ENCODE measurements at regions of chr20 and their contacts with region 1.

Region 1: GRCh38 chr20:5100684-5101347 is 18.9 kb downstream of the PCNA start:
- DNase-seq: peak; percentile 56 to 72
- H3K4me3 ChIP-seq: no peak overlapping the region
- H3K27ac ChIP-seq: peak overlapping the region; percentile 64
- H3K4me1 ChIP-seq: 0 out of 2 replicates have a peak, but pooled peaks cover 4% of the 10 kb centered on the region
- H3K27me3 ChIP-seq: no peaks in the 10 kb centered on the region
- CTCF ChIP-seq: peak; percentile 93

Region 2: DNA sequence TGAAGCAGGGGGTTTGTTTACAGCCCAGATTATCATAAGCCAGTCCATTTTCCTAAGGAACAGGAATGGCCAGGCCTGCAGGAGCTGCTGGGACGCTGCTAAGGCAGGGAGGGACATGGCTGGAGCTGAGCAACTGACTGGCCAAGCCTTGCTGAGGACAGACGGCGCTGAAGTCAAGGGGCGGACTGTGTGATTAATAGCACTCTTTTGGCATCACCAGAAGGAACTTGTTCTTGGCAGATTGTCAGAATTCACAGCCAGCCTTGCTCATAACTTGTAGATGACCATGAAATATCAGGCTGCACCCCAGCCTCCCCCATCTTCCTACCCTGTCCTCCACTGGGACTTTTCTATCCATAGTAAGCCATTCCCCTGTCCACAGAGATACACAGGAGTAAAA is 866.7 kb before region 1 on chr20:
- CTCF ChIA-PET with region 1: interaction called, 12 read pairs
- POLR2A ChIA-PET with region 1: no interaction called
- intact Hi-C with region 1: no loop called
- DNase-seq: no peak
- H3K4me3 ChIP-seq: no peak overlapping the region
- H3K27ac ChIP-seq: no peak overlapping the region
- H3K4me1 ChIP-seq: no peaks in the 10 kb centered on the region; the same call in 1 of the 2 replicates
- H3K27me3 ChIP-seq: no peaks in the 10 kb centered on the region
- CTCF ChIP-seq: no peak

Region 3: DNA sequence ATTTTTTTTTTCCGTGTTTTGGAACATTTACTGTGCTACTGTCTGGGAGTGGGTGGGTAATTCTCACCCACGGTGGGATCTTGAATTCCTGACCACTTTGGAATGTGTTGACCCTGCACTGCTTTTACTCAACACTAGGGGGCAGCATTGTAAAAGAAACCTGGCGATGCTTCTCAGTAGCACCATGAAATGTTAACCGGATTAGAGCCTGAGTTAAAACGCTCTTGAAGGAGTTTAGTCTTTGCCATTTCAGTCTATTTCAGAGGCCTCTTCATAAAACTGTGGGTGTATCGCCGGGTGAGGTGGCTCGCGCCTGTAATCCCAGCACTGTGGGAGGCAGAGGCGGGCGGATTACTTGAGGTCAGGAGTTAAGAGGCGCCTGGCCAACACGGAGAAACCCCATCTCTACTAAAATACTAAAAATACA is 493.5 kb before region 1 on chr20:
- CTCF ChIA-PET with region 1: no interaction called
- POLR2A ChIA-PET with region 1: no interaction called
- intact Hi-C with region 1: loop called (anchors 5 kb)
- DNase-seq: peak; percentile 49 to 57
- H3K4me3 ChIP-seq: no peak overlapping the region
- H3K27ac ChIP-seq: no peak overlapping the region
- H3K4me1 ChIP-seq: peaks cover 7% of the 10 kb centered on the region
- H3K27me3 ChIP-seq: no peaks in the 10 kb centered on the region
- CTCF ChIP-seq: peak; percentile 97

Region 4: GRCh38 chr20:5001174-5002076 is 99.4 kb before region 1 on chr20 and contains the start of gene SLC23A2:
- CTCF ChIA-PET with region 1: no interaction called
- POLR2A ChIA-PET with region 1: no interaction called
- intact Hi-C with region 1: loop called (anchors 2 kb)
- DNase-seq: peak; percentile 45 to 60
- H3K4me3 ChIP-seq: peak within 1 kb of the TSS; percentile 93
- H3K27ac ChIP-seq: peak within 1 kb of the TSS; percentile 45
- H3K4me1 ChIP-seq: peaks cover 19% of the 10 kb centered on the region
- H3K27me3 ChIP-seq: no peaks in the 10 kb centered on the region
- CTCF ChIP-seq: no peak
- total RNA-seq, gene SLC23A2: 20.4 and 22.3 TPM in 2 replicates

Region 5: GRCh38 chr20:5065166-5065878 is 35.5 kb before region 1 on chr20:
- CTCF ChIA-PET with region 1: interaction called, 4 read pairs
- POLR2A ChIA-PET with region 1: no interaction called
- intact Hi-C with region 1: loop called (anchors 2 kb)
- DNase-seq: peak in 1 of 2 experiments; percentile 78
- H3K4me3 ChIP-seq: peak overlapping the region; percentile 22; the same call in 1 of the 2 replicates
- H3K27ac ChIP-seq: peak overlapping the region; percentile 100
- H3K4me1 ChIP-seq: peaks cover 45% of the 10 kb centered on the region
- H3K27me3 ChIP-seq: no peaks in the 10 kb centered on the region
- CTCF ChIP-seq: no peak